ENCODE measurements at regions of chr12 and their contacts with region 1.

Region 1: DNA sequence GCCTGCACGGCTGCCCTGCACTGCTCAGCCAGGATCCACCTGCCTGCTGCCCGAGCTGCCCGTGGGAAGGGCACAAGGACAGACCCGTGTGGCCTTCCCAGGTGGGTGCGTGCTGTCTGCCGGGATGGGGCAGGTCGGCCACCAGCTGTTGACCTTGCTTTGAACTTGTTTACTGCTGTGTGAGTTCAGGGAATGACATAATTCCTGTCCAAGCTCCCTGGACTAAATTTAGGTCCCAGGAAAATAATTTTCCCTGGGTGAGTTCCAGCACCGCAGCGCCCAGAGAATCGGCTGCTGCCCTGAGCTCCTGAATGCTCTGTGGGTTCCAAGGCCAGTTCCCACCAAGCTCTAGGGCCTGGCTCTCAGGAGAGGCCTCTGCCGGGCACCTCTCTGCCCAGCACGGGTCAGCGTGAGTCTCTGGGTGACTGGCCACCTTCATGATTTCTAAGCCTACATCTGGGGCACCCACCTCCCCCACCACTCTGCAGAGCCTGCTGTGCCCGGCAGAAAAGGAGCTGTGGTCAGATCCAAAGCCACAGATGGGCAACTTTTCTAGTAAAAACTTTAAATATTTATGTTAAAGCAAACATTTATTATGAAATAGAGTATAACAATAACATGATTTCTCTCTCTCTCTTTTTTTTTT is 27.2 kb upstream of the MLXIP start:
- DNase-seq: no peak
- ATAC-seq: 0 out of 6 replicates have a peak, but pooled peaks of 1 of the 2 experiments have one; percentile 6
- H3K4me3 ChIP-seq: no peak overlapping the region
- H3K27ac ChIP-seq: peak overlapping the region; percentile 10 to 59; a peak in 3 of 6 replicates
- H3K4me1 ChIP-seq: peaks cover 24% of the 10 kb centered on the region
- CTCF ChIP-seq: no peak
- EP300 ChIP-seq: no peak
- POLR2A ChIP-seq: no peak
- RAD21 ChIP-seq: no peak

Region 2: GRCh38 chr12:122040579-122041386 is 10.6 kb before region 1 on chr12:
- CTCF ChIA-PET with region 1: interaction called, 15 read pairs
- POLR2A ChIA-PET with region 1: no interaction called
- DNase-seq: peak; percentile 95 to 98
- ATAC-seq: peak; percentile 98 to 99
- H3K4me3 ChIP-seq: no peak overlapping the region
- H3K27ac ChIP-seq: peak overlapping the region; percentile 84 to 96
- H3K4me1 ChIP-seq: peaks cover 27% of the 10 kb centered on the region
- CTCF ChIP-seq: no peak
- EP300 ChIP-seq: no peak
- POLR2A ChIP-seq: no peak
- RAD21 ChIP-seq: no peak

Region 3: GRCh38 chr12:122078141-122079032 is 27.0 kb after region 1 on chr12 and contains the start of gene MLXIP:
- CTCF ChIA-PET with region 1: interaction called, 50 read pairs
- POLR2A ChIA-PET with region 1: interaction called, 4 read pairs
- DNase-seq: peak; percentile 94
- ATAC-seq: peak; percentile 83 to 86
- H3K4me3 ChIP-seq: peak within 1 kb of the TSS; percentile 94
- H3K27ac ChIP-seq: peak within 1 kb of the TSS; percentile 88 to 98
- H3K4me1 ChIP-seq: peaks cover 46% of the 10 kb centered on the region
- CTCF ChIP-seq: no peak
- EP300 ChIP-seq: no peak
- POLR2A ChIP-seq: peak; percentile 67
- RAD21 ChIP-seq: no peak
- polyA plus RNA-seq, gene MLXIP: 7.0 and 11.6 TPM in 2 replicates

Region 4: DNA sequence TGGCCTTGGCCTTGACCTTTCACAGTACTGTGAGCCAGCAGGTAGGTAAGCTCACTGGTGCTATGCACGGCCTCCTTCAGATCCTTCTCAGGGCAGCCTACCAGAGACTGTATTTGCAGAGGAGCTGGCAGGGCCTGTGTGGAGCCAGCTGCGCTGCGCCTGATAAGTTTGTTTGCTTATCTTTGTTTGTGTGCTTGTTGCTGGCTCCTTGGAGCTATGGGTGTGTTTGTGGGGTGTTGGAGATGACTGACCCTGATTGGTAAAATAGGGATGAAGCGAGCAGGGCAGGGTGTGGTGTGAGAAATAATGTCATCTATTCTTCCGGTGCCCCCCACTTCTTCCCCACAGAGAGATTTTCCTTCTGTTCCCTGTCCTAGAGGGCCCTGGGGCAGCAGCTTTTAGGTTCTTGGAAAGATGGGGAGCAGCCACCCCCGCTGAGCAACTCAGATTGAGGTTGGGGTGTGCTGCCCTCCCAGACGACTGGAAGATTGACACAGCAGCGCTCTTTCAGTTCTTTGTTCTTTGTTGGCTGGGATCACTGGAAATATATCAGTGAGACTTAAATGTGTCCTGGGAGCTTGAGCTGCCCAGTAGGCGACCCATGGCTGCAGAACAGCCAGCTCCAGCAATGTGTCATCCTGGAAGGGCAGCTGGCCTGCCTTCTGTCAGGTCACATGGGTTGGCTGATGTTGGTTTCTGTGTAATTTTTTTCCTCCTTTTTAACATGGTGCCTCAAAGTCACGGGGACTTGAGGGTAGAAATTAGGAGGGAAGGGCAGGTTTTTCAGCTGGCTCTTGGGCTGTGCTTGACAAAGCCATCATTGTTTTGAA is 46.8 kb after region 1 on chr12:
- CTCF ChIA-PET with region 1: interaction called, 15 read pairs
- POLR2A ChIA-PET with region 1: no interaction called
- DNase-seq: peak; percentile 66 to 92
- ATAC-seq: peak; percentile 86 to 93
- H3K4me3 ChIP-seq: 0 out of 3 replicates have a peak overlapping the region, but pooled peaks have one; percentile 12
- H3K27ac ChIP-seq: peak overlapping the region; percentile 81 to 88
- H3K4me1 ChIP-seq: peaks cover 63% of the 10 kb centered on the region
- CTCF ChIP-seq: no peak
- EP300 ChIP-seq: no peak
- POLR2A ChIP-seq: no peak
- RAD21 ChIP-seq: no peak

Region 5: DNA sequence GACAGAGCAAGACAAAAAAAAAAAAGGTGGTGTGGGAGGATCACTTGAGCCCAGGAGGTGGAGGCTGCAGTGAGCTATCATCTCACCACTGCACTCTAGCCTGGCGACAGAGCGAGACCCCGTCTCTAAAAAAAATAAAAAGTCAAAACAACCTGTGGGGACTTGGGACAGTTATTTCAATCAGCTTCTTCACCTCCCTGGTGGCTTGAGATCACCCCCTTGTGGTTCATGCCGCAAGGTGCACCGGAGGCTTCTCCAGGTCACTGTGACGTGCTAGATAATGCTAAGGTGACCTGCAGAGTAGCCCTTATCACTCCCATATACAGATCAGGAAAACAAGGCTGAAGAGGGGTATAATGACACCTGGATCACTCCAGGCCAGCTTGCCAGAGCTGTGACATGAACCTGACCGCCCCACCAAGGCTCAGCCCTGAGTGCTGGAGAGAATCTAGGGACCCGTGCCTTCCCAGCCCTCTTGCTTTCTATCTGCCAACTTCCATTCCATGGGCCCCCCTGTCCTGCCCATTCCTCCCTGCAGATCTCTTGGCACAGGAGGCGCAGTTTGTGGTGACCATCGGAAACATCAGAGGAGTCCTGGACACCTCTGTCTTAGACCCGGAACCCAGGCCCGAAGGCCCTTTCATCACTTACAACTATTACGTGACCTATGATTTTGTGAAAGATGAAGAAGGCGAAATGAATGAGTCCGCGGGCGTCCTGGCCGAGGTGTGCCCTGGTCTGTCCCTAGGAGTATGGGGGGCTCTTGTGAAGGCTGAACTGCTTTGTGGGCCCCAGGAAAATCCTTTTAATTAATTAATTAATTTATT is 139.7 kb after region 1 on chr12:
- CTCF ChIA-PET with region 1: interaction called, 44 read pairs
- POLR2A ChIA-PET with region 1: no interaction called
- DNase-seq: peak; percentile 79 to 93
- ATAC-seq: peak; percentile 95
- H3K4me3 ChIP-seq: no peak overlapping the region
- H3K27ac ChIP-seq: no peak overlapping the region
- H3K4me1 ChIP-seq: no peaks in the 10 kb centered on the region
- CTCF ChIP-seq: peak; percentile 71
- EP300 ChIP-seq: no peak
- POLR2A ChIP-seq: no peak
- RAD21 ChIP-seq: peak; percentile 80 to 92

Region 6: GRCh38 chr12:122545855-122546254 is 494.5 kb after region 1 on chr12:
- CTCF ChIA-PET with region 1: no interaction called
- POLR2A ChIA-PET with region 1: no interaction called
- DNase-seq: no peak
- ATAC-seq: no peak
- H3K4me3 ChIP-seq: no peak overlapping the region
- H3K27ac ChIP-seq: no peak overlapping the region
- H3K4me1 ChIP-seq: no peaks in the 10 kb centered on the region
- CTCF ChIP-seq: no peak
- EP300 ChIP-seq: no peak
- POLR2A ChIP-seq: no peak
- RAD21 ChIP-seq: no peak

Measured in A549 (cell line).